A549 (cell line): ENCODE measurements at regions of chr15 and their contacts with region 1.

Region 1: DNA sequence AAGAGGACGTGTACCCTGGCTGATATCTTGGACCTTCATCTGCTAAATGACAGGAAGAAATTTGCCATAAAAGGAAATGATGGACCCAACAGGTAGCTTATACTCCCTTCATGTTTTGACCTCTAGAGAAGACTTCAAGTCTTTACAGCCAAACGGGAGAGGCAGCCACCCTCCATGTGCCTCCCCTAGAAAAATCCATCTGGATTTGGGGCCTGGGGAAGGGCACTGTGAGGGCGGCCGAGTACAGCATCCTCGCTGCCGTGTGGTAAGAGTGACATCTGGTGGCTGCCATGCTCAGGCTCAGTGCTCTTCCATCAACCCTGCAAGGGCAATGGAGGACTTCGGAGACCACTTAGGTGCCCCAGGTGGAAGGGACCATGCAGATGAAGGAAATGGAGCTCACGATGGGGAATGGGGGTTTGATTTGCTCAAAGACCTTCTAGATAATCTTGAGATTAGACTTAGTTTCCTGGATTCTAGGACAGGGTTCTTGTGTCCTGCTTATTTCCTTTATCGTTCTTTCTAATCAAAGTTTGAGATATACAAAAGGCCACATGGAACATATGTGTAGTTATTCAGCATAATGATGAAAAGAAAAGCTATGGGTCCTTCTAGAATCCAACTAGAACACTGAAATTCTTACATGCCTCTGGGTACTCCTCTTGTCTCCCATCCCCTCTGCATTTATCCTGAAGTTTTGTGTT is 44.4 kb downstream of the AQP9 start:
- DNase-seq: peak; percentile 65 to 75
- ATAC-seq: peak; percentile 95 to 100
- H3K4me3 ChIP-seq: no peak overlapping the region
- H3K27ac ChIP-seq: no peak overlapping the region
- H3K4me1 ChIP-seq: no peaks in the 10 kb centered on the region
- CTCF ChIP-seq: peak; percentile 96
- EP300 ChIP-seq: no peak
- POLR2A ChIP-seq: no peak
- RAD21 ChIP-seq: peak; percentile 95 to 97

Region 2: GRCh38 chr15:57751177-57751800 is 431.3 kb before region 1 on chr15:
- CTCF ChIA-PET with region 1: interaction called, 25 read pairs
- POLR2A ChIA-PET with region 1: no interaction called
- DNase-seq: peak; percentile 29 to 50
- ATAC-seq: peak; percentile 65 to 85; a peak in 4 of 6 replicates
- H3K4me3 ChIP-seq: no peak overlapping the region
- H3K27ac ChIP-seq: no peak overlapping the region
- H3K4me1 ChIP-seq: no peaks in the 10 kb centered on the region
- CTCF ChIP-seq: peak; percentile 63
- EP300 ChIP-seq: no peak
- POLR2A ChIP-seq: no peak
- RAD21 ChIP-seq: peak; percentile 71 to 76

Region 3: GRCh38 chr15:57866149-57866736 is 316.4 kb before region 1 on chr15:
- CTCF ChIA-PET with region 1: interaction called, 24 read pairs
- POLR2A ChIA-PET with region 1: no interaction called
- DNase-seq: peak; percentile 53 to 58
- ATAC-seq: peak; percentile 72 to 89
- H3K4me3 ChIP-seq: no peak overlapping the region
- H3K27ac ChIP-seq: no peak overlapping the region
- H3K4me1 ChIP-seq: no peaks in the 10 kb centered on the region
- CTCF ChIP-seq: peak; percentile 83
- EP300 ChIP-seq: no peak
- POLR2A ChIP-seq: no peak
- RAD21 ChIP-seq: peak; percentile 59 to 63

Region 4: GRCh38 chr15:58064082-58064979 is 118.3 kb before region 1 on chr15:
- CTCF ChIA-PET with region 1: interaction called, 31 read pairs
- POLR2A ChIA-PET with region 1: no interaction called
- DNase-seq: no peak
- ATAC-seq: no peak
- H3K4me3 ChIP-seq: no peak overlapping the region
- H3K27ac ChIP-seq: no peak overlapping the region
- H3K4me1 ChIP-seq: peaks cover 7% of the 10 kb centered on the region; the same call in 1 of the 3 replicates
- CTCF ChIP-seq: no peak
- EP300 ChIP-seq: no peak
- POLR2A ChIP-seq: no peak
- RAD21 ChIP-seq: no peak

Region 5: GRCh38 chr15:58109419-58109818 is 73.2 kb before region 1 on chr15:
- CTCF ChIA-PET with region 1: interaction called, 14 read pairs
- POLR2A ChIA-PET with region 1: no interaction called
- DNase-seq: no peak
- ATAC-seq: no peak
- H3K4me3 ChIP-seq: no peak overlapping the region
- H3K27ac ChIP-seq: no peak overlapping the region
- H3K4me1 ChIP-seq: no peaks in the 10 kb centered on the region
- CTCF ChIP-seq: no peak
- EP300 ChIP-seq: no peak
- POLR2A ChIP-seq: no peak
- RAD21 ChIP-seq: no peak

Region 6: DNA sequence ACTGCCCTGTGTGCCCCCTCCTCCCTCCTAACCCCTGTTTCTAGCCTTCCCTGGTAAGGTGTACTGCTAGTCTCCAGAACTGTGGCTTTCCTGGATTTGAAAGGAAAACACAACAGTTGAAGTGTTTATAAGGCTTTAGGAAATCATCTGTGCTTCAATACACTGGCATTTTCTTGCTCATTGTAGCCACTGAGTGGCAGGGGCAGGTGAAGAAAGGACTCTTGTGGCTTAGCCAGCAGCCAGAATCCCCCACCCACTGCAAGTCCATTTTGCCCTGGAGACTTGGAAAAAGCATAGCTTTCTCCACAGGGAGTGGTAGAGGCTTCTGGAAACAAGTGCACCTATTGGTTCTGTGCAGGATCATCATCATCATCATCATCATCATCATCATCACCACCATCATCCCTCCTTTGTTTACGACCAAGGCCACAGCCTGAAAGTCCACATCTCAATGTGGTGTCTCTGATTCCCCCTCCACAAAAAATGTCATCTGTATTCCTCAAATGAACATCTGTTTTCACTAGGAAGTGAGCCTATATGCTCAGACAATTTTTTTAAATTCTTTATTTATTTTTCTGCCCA is 11.0 kb before region 1 on chr15:
- CTCF ChIA-PET with region 1: interaction called, 36 read pairs
- POLR2A ChIA-PET with region 1: no interaction called
- DNase-seq: no peak
- ATAC-seq: no peak
- H3K4me3 ChIP-seq: no peak overlapping the region
- H3K27ac ChIP-seq: no peak overlapping the region
- H3K4me1 ChIP-seq: no peaks in the 10 kb centered on the region
- CTCF ChIP-seq: no peak
- EP300 ChIP-seq: no peak
- POLR2A ChIP-seq: no peak
- RAD21 ChIP-seq: no peak